Natural killer cell (primary cell): ENCODE measurements at regions of chr1 and their contacts with region 1.

Region 1: GRCh38 chr1:32013386-32014198 is at the start of gene KHDRBS1:
- DNase-seq: peak; percentile 92 to 100
- ATAC-seq: peak; percentile 79 to 92 (median 82)
- H3K4me3 ChIP-seq: peak within 1 kb of the TSS; percentile 91
- H3K4me3 Mint-ChIP-seq: peak within 1 kb of the TSS; percentile 94
- H3K27ac ChIP-seq: peak within 1 kb of the TSS; percentile 94
- H3K27ac Mint-ChIP-seq: peak within 1 kb of the TSS; percentile 91 to 95
- H3K4me1 ChIP-seq: peaks cover 25% of the 10 kb centered on the region
- H3K4me1 Mint-ChIP-seq: peaks cover 34 to 42% of the 10 kb centered on the region in 2 donors
- H3K27me3 ChIP-seq: no peaks in the 10 kb centered on the region
- H3K27me3 Mint-ChIP-seq: no peaks in the 10 kb centered on the region
- CTCF ChIP-seq: no peak
- total RNA-seq, gene KHDRBS1: 107 to 112 (median 109) TPM

Region 2: GRCh38 chr1:31938174-31938950 is 75.2 kb before region 1 on chr1 and contains the start of gene PTP4A2:
- intact Hi-C with region 1: no loop called
- DNase-seq: peak; percentile 85 to 92
- ATAC-seq: peak; percentile 61 to 86 (median 78)
- H3K4me3 ChIP-seq: peak within 1 kb of the TSS; percentile 83
- H3K4me3 Mint-ChIP-seq: peak within 1 kb of the TSS; percentile 100
- H3K27ac ChIP-seq: peak within 1 kb of the TSS; percentile 78
- H3K27ac Mint-ChIP-seq: peak within 1 kb of the TSS; percentile 90 to 99
- H3K4me1 ChIP-seq: peaks cover 70% of the 10 kb centered on the region
- H3K4me1 Mint-ChIP-seq: peaks cover 72 to 76% of the 10 kb centered on the region in 2 donors
- H3K27me3 ChIP-seq: no peaks in the 10 kb centered on the region
- H3K27me3 Mint-ChIP-seq: no peaks in the 10 kb centered on the region
- CTCF ChIP-seq: peak; percentile 53
- total RNA-seq, gene PTP4A2: 435 to 527 (median 443) TPM

Region 3: GRCh38 chr1:32072622-32073298 is 59.2 kb after region 1 on chr1 and contains the start of gene TMEM39B:
- intact Hi-C with region 1: loop called (anchors 2 kb)
- DNase-seq: peak; percentile 93 to 96
- ATAC-seq: peak; percentile 86 to 95 (median 88)
- H3K4me3 ChIP-seq: peak within 1 kb of the TSS; percentile 90
- H3K4me3 Mint-ChIP-seq: peak within 1 kb of the TSS; percentile 97
- H3K27ac ChIP-seq: peak within 1 kb of the TSS; percentile 77
- H3K27ac Mint-ChIP-seq: peak within 1 kb of the TSS; percentile 87 to 89
- H3K4me1 ChIP-seq: peaks cover 23% of the 10 kb centered on the region
- H3K4me1 Mint-ChIP-seq: peaks cover 25 to 29% of the 10 kb centered on the region in 2 donors
- H3K27me3 ChIP-seq: no peaks in the 10 kb centered on the region
- H3K27me3 Mint-ChIP-seq: no peaks in the 10 kb centered on the region
- CTCF ChIP-seq: no peak
- total RNA-seq, gene TMEM39B: 13.3 to 17.1 (median 15.8) TPM